OCI-LY7 (cell line): ENCODE measurements at regions of chr21 and their contacts with region 1.

Region 1: DNA sequence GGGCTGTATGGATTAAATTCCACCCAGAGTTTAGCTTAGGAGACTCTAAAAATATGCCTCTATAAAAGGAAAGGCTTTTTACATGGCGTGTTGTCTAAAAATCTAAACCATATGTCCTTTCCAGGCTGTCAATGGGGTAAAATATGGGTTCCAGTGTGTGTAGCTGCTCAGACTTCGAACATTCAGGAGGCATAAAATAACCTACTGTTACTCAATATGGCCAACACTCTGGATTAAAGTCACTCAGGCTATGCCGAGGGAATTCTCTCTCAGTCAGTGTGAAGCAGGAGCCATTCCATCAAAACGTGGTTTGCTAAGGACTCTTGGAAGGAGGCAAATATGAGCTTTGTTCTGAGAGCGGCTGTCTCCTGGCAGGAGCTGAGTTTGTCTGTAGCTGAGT is 135.3 kb downstream of the RUNX1 start:
- DNase-seq: no peak
- H3K4me3 ChIP-seq: no peak overlapping the region
- H3K27ac ChIP-seq: no peak overlapping the region
- H3K4me1 ChIP-seq: peaks cover 21% of the 10 kb centered on the region
- CTCF ChIP-seq: no peak

Region 2: DNA sequence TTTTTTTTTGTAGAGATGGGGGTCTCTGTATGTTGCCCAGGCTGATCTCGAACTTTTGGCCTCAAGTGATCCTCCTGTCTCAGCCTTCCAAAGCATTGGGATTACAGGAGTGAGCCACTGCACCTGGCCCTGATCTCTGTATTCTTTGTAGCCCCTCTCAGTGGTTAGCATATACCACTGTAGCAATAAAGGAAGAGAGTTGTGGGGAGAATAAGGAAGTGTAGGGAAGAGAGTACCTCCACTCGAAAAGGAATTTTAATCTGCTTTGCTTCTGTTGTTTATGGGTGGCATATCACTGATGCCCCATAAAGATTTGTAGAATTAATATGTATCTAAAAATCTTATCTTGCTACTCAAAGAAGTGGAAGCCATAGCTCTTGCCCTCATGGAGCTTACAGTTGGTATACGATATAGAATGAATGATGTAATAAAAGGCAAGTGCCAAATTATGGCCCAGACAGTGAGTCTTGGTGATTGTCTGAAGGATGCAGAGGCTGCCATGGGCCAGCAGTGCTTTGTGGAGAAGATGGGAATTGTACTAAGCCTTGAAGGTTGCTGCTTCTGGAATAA is 149.0 kb before region 1 on chr21:
- CTCF ChIA-PET with region 1: no interaction called
- POLR2A ChIA-PET with region 1: interaction called, 10 read pairs
- intact Hi-C with region 1: no loop called
- DNase-seq: no peak
- H3K4me3 ChIP-seq: no peak overlapping the region
- H3K27ac ChIP-seq: no peak overlapping the region
- H3K4me1 ChIP-seq: no peaks in the 10 kb centered on the region
- CTCF ChIP-seq: no peak

Region 3: GRCh38 chr21:34886240-34887104 is 27.3 kb before region 1 on chr21:
- CTCF ChIA-PET with region 1: no interaction called
- POLR2A ChIA-PET with region 1: no interaction called
- intact Hi-C with region 1: no loop called
- DNase-seq: no peak
- H3K4me3 ChIP-seq: no peak overlapping the region
- H3K27ac ChIP-seq: no peak overlapping the region
- H3K4me1 ChIP-seq: peaks cover 38% of the 10 kb centered on the region
- CTCF ChIP-seq: no peak